ENCODE measurements at regions of chr1 and their contacts with region 1.

Region 1: DNA sequence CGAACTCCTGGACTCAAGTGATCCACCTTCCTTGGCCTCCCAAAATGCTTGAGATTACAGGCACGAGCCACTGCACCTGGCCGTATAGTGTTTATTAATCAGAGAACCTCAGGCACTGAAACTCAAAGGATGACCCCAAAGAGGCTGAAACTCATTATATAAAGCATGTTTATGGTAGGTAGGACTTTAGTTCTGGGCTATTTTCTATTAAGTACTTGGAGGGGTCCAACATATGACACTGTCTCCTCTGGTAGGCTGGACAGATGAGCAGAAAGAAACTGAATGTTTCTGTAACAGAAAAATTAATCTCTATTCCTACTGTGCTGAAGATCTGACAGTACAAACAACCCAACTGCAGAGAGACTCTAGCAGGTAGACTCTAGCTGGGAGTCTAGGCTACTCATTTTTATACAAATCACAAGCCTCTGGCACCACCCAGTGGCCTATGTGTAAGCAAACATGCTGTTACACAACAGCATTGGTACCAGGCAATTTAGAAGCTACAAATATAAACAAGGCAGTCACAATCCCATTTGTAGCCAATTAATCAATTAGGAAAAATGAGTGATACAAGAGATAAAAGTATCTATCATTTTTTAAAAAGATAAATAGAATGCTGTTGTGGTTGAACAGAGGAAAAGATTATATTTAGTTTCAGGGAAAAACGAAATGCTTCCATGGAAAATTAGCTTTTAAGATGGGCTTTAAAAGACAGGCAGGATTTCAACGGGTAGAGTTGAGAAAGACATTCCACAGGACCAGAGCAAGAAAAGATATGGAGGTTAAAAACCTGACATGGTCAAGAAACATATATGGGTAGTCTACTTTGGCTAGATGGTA is 10.4 kb downstream of the DCAF8 start:
- H3K4me3 ChIP-seq: no peak overlapping the region
- H3K27ac ChIP-seq: no peak overlapping the region
- H3K4me1 ChIP-seq: peaks cover 10% of the 10 kb centered on the region; the same call in 1 of the 2 replicates
- CTCF ChIP-seq: no peak

Region 2: GRCh38 chr1:160085686-160086455 is 166.0 kb before region 1 on chr1:
- CTCF ChIA-PET with region 1: interaction called, 24 read pairs
- POLR2A ChIA-PET with region 1: no interaction called
- H3K4me3 ChIP-seq: no peak overlapping the region
- H3K27ac ChIP-seq: no peak overlapping the region
- H3K4me1 ChIP-seq: no peaks in the 10 kb centered on the region
- CTCF ChIP-seq: peak; percentile 82

Region 3: GRCh38 chr1:160161965-160162705 is 89.8 kb before region 1 on chr1:
- CTCF ChIA-PET with region 1: interaction called, 12 read pairs
- POLR2A ChIA-PET with region 1: no interaction called
- H3K4me3 ChIP-seq: no peak overlapping the region
- H3K27ac ChIP-seq: no peak overlapping the region
- H3K4me1 ChIP-seq: no peaks in the 10 kb centered on the region
- CTCF ChIP-seq: peak; percentile 56

Region 4: DNA sequence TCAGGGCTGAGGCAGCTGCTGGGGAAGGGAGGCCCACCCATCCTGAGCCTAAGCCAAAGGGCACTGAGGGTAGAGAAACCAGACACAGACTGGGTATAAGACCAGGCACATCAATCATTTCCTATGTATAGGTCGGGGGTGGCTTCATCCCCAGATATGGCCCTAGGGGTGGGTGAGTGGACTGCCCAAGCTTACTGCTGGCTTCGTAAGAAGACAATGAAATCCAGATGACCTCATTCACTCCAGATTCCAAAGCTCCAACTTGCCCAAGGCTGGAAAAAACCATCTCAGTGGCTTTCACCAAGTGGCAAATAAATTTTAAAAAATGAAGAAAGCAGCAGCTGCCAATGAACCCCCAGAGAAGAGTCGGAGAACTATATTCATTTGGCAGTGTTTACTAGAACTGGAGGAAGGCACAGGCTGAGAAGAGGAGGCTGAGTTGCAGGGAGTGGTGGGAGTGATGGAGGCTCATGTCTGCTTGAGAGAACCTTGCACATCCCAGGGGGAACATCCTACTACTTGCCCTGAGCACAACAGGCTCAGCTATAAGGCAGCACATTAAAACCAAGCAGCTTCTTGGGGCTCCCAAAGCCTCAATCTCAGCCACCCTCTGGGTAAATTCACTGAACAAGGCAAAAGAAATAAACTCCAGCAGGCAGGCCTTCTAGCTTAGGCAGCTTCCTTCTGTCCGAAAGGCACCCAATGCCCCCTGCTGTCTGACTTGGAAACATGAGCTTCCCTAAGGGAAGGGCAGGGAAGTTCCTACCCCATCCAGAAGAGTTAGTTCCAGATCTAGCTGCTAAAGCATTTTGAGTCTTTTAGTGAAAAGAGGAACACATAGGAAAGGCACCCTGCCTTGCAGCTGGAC is 32.6 kb before region 1 on chr1:
- CTCF ChIA-PET with region 1: interaction called, 43 read pairs
- POLR2A ChIA-PET with region 1: interaction called, 4 read pairs
- H3K4me3 ChIP-seq: no peak overlapping the region
- H3K27ac ChIP-seq: no peak overlapping the region; the same call in 1 of the 2 replicates
- H3K4me1 ChIP-seq: no peaks in the 10 kb centered on the region
- CTCF ChIP-seq: peak; percentile 69; the same call in 1 of the 2 replicates

Region 5: GRCh38 chr1:160284782-160285344 is 33.0 kb after region 1 on chr1 and contains the start of gene PEX19:
- CTCF ChIA-PET with region 1: interaction called, 57 read pairs
- POLR2A ChIA-PET with region 1: interaction called, 3 read pairs
- H3K4me3 ChIP-seq: peak within 1 kb of the TSS; percentile 82
- H3K27ac ChIP-seq: peak within 1 kb of the TSS; percentile 30; the same call in 1 of the 2 replicates
- H3K4me1 ChIP-seq: no peaks in the 10 kb centered on the region
- CTCF ChIP-seq: no peak